ENCODE measurements at regions of chr3 and their contacts with region 1.

Region 1: GRCh38 chr3:53219895-53220483 is 35.8 kb downstream of the TKT start:
- DNase-seq: peak; percentile 87 to 92
- H3K4me3 ChIP-seq: no peak overlapping the region
- H3K4me3 Mint-ChIP-seq: no peak overlapping the region
- H3K27ac Mint-ChIP-seq: no peak overlapping the region
- H3K4me1 ChIP-seq: no peaks in the 10 kb centered on the region
- H3K4me1 Mint-ChIP-seq: no peaks in the 10 kb centered on the region
- H3K27me3 ChIP-seq: no peaks in the 10 kb centered on the region
- H3K27me3 Mint-ChIP-seq: peaks cover 2% of the 10 kb centered on the region
- CTCF ChIP-seq: peak; percentile 85 to 91

Region 2: DNA sequence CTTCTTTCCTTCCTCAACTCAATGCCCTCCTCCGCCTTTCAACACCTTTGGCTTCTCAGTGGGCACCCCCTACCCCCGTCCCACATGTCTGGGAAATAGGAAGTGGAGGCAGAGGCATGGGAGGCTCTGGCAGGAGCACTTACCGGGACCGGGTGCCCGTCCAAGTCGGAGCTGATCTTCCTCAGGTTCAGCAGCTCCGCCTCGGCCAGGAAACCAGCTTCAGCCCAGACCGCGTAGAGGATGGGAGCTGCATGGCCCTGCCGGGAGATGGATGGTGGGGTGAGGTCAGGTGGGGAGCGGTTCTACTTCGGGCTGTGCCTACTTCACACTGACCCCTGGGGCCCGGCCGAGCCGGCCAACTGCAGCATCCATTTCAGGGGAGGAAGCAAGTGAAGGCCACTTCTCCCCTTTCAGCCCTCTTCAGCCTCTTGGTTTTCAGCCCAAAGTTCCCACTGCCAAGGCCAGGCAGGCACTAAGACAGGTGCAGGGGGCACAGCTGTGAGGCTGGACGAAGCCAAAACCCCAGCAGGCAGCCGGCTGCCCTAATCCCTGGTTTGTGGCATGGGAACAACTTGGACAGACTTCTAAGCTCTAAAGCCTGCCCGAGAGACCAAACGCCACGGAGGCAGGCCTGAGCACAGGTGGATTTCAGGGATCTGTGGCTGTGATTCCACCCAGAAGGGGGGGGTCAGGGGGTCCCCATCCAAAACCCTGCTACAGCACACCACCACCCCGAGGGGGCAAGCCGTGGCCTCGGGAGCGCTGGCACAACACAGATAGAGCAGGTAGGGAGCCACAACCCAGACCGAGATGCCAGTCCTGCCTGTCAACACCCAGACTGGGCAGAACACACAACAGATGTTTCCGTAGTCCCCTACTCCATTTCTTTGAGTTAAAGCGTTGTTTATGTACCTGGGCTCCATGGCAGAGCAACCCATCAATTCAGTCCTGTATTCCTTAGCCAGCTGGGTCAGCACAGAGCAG is 21.3 kb after region 1 on chr3:
- CTCF ChIA-PET with region 1: no interaction called
- POLR2A ChIA-PET with region 1: no interaction called
- intact Hi-C with region 1: no loop called
- DNase-seq: no peak
- H3K4me3 ChIP-seq: no peak overlapping the region
- H3K4me3 Mint-ChIP-seq: no peak overlapping the region
- H3K27ac Mint-ChIP-seq: no peak overlapping the region
- H3K4me1 ChIP-seq: peaks cover 18% of the 10 kb centered on the region
- H3K4me1 Mint-ChIP-seq: peaks cover 18% of the 10 kb centered on the region
- H3K27me3 ChIP-seq: no peaks in the 10 kb centered on the region
- H3K27me3 Mint-ChIP-seq: no peaks in the 10 kb centered on the region
- CTCF ChIP-seq: no peak

Region 3: GRCh38 chr3:53255775-53256703 is 36.0 kb after region 1 on chr3 and contains the start of gene TKT:
- CTCF ChIA-PET with region 1: no interaction called
- POLR2A ChIA-PET with region 1: interaction called, 3 read pairs
- intact Hi-C with region 1: loop called (anchors 2 kb)
- DNase-seq: peak; percentile 85 to 87
- H3K4me3 ChIP-seq: peak within 1 kb of the TSS; percentile 73
- H3K4me3 Mint-ChIP-seq: peak within 1 kb of the TSS; percentile 79
- H3K27ac Mint-ChIP-seq: peak within 1 kb of the TSS; percentile 71
- H3K4me1 ChIP-seq: peaks cover 25% of the 10 kb centered on the region
- H3K4me1 Mint-ChIP-seq: peaks cover 13% of the 10 kb centered on the region
- H3K27me3 ChIP-seq: no peaks in the 10 kb centered on the region
- H3K27me3 Mint-ChIP-seq: no peaks in the 10 kb centered on the region
- CTCF ChIP-seq: no peak
- total RNA-seq, gene TKT: 339 and 381 TPM in 2 replicates

Region 4: GRCh38 chr3:53269888-53270880 is 50.2 kb after region 1 on chr3:
- CTCF ChIA-PET with region 1: interaction called, 3 read pairs
- POLR2A ChIA-PET with region 1: no interaction called
- intact Hi-C with region 1: loop called (anchors 5 kb)
- DNase-seq: peak; percentile 87 to 95
- H3K4me3 ChIP-seq: no peak overlapping the region
- H3K4me3 Mint-ChIP-seq: peak overlapping the region; percentile 7
- H3K27ac Mint-ChIP-seq: peak overlapping the region; percentile 90
- H3K4me1 ChIP-seq: peaks cover 36% of the 10 kb centered on the region
- H3K4me1 Mint-ChIP-seq: peaks cover 29% of the 10 kb centered on the region
- H3K27me3 ChIP-seq: no peaks in the 10 kb centered on the region
- H3K27me3 Mint-ChIP-seq: no peaks in the 10 kb centered on the region
- CTCF ChIP-seq: no peak

Region 5: DNA sequence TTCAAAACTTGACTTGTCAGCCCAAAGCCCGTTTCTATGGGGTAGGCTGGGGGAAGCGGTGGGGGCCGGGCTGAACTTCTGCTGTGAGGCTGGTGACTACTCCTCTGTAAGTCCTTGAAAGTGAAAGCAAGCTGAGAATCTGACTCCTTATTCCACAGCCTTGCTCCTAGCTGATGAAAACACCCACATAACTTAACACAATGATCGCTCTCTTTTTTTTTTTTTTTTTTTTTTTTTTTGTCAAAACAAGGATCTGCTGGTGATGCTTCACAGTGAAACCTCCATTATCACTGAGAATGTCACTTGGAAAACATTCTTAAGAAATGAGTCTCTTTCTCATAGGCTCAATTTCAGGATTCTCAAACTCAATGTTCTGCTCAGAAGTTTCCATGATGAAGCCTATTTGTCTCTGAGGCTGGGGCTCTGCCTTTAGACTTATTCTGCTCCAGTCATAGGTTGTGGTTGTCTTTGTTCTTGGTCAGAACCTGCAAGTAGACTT is 67.2 kb after region 1 on chr3:
- CTCF ChIA-PET with region 1: no interaction called
- POLR2A ChIA-PET with region 1: no interaction called
- intact Hi-C with region 1: loop called (anchors 5 kb)
- DNase-seq: no peak
- H3K4me3 ChIP-seq: no peak overlapping the region
- H3K4me3 Mint-ChIP-seq: no peak overlapping the region
- H3K27ac Mint-ChIP-seq: no peak overlapping the region
- H3K4me1 ChIP-seq: no peaks in the 10 kb centered on the region
- H3K4me1 Mint-ChIP-seq: no peaks in the 10 kb centered on the region
- H3K27me3 ChIP-seq: no peaks in the 10 kb centered on the region
- H3K27me3 Mint-ChIP-seq: no peaks in the 10 kb centered on the region
- CTCF ChIP-seq: no peak

Region 6: DNA sequence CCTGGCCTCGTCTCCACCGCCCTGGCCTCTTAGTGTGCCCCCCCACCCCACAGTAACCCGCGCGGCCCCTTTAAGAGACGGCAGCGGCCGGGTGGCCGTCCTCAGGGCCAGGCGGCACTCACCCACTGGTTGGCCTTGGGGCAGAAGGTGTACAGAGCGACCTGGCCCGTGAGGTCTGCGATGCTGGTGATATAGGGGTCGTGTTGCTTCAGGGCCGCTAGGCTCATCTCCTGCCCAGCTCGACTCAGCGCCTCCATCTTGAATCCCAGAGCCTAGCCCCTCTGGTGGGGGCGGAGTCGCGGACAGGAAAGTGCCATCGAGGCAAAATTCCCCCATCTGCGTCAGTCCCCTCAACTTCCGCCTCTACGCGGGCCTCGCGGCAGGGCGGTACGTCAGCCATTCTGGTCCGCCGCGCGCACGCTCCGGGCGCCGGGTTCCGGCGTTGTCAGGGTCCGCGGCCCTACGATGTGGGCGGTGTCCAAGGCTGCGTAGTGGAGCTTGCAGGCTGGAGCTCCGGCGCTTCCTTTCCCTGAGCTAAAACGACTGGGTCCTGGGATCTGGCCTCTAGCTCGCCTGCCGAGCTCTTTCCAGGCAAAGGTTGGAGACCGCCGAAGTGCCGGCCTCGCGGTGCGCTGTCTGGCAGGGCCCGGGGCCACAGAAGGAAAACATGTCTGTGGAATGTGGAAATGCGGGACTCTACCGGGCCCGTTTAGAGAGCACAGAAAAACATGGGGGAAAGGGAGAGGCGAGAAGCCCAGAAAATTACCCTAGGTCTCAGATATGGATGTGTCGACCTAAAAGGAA is 127.5 kb after region 1 on chr3 and contains the start of gene DCP1A:
- CTCF ChIA-PET with region 1: interaction called, 3 read pairs
- POLR2A ChIA-PET with region 1: no interaction called
- intact Hi-C with region 1: loop called (anchors 5 kb)
- DNase-seq: peak; percentile 95 to 97
- H3K4me3 ChIP-seq: peak within 1 kb of the TSS; percentile 100
- H3K4me3 Mint-ChIP-seq: peak within 1 kb of the TSS; percentile 91
- H3K27ac Mint-ChIP-seq: peak within 1 kb of the TSS; percentile 98
- H3K4me1 ChIP-seq: peaks cover 39% of the 10 kb centered on the region
- H3K4me1 Mint-ChIP-seq: peaks cover 26% of the 10 kb centered on the region
- H3K27me3 ChIP-seq: no peaks in the 10 kb centered on the region
- H3K27me3 Mint-ChIP-seq: no peaks in the 10 kb centered on the region
- CTCF ChIP-seq: no peak
- total RNA-seq, gene DCP1A: 32.5 and 32.9 TPM in 2 replicates

Region 7: DNA sequence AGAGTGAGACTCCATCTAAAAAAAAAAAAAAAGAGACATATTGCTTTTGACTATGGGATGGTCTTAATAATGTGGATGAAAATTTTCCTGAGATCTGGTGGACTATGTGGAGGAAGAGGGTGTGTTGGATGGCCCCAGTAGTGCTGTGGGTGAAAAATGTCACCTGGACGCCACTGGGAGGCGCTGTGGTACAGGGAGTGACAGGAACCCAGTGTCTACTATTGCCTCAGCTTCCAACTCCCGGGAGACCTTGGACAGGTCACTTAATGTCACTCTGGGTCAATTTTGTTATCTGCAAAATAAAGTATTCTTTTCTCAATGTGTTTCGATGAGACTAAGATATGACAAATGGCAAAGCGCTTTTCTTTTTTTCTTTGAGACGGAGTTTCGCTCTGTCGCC is 155.0 kb after region 1 on chr3:
- CTCF ChIA-PET with region 1: no interaction called
- POLR2A ChIA-PET with region 1: no interaction called
- intact Hi-C with region 1: no loop called
- DNase-seq: peak; percentile 80 to 82
- H3K4me3 ChIP-seq: no peak overlapping the region
- H3K4me3 Mint-ChIP-seq: no peak overlapping the region
- H3K27ac Mint-ChIP-seq: no peak overlapping the region
- H3K4me1 ChIP-seq: no peaks in the 10 kb centered on the region
- H3K4me1 Mint-ChIP-seq: no peaks in the 10 kb centered on the region
- H3K27me3 ChIP-seq: no peaks in the 10 kb centered on the region
- H3K27me3 Mint-ChIP-seq: no peaks in the 10 kb centered on the region
- CTCF ChIP-seq: peak; percentile 86 to 89

Region 8: GRCh38 chr3:53416530-53416929 is 196.5 kb after region 1 on chr3:
- CTCF ChIA-PET with region 1: no interaction called
- POLR2A ChIA-PET with region 1: no interaction called
- intact Hi-C with region 1: no loop called
- DNase-seq: peak; percentile 12 to 42
- H3K4me3 ChIP-seq: no peak overlapping the region
- H3K4me3 Mint-ChIP-seq: no peak overlapping the region
- H3K27ac Mint-ChIP-seq: peak overlapping the region; percentile 14
- H3K4me1 ChIP-seq: 0 out of 2 replicates have a peak, but pooled peaks cover 6% of the 10 kb centered on the region
- H3K4me1 Mint-ChIP-seq: peaks cover 11% of the 10 kb centered on the region
- H3K27me3 ChIP-seq: no peaks in the 10 kb centered on the region
- H3K27me3 Mint-ChIP-seq: no peaks in the 10 kb centered on the region
- CTCF ChIP-seq: no peak

Measured in Caco-2 (cell line).